Naive thymus-derived CD4-positive, alpha-beta T cell (primary cell): ENCODE measurements at regions of chr7 and their contacts with region 1.

Region 1: GRCh38 chr7:73572767-73573186 is 5.6 kb downstream of the TBL2 start:
- DNase-seq: no peak
- ATAC-seq: no peak
- H3K4me3 ChIP-seq: no peak overlapping the region
- H3K4me3 Mint-ChIP-seq: no peak overlapping the region
- H3K27ac ChIP-seq: no peak overlapping the region
- H3K27ac Mint-ChIP-seq: no peak overlapping the region
- H3K4me1 ChIP-seq: peaks cover 13 to 19% of the 10 kb centered on the region in 2 donors
- H3K4me1 Mint-ChIP-seq: peaks cover 11 to 38% (median 27%) of the 10 kb centered on the region in 7 donors
- H3K27me3 ChIP-seq: no peaks in the 10 kb centered on the region
- H3K27me3 Mint-ChIP-seq: no peaks in the 10 kb centered on the region

Region 2: DNA sequence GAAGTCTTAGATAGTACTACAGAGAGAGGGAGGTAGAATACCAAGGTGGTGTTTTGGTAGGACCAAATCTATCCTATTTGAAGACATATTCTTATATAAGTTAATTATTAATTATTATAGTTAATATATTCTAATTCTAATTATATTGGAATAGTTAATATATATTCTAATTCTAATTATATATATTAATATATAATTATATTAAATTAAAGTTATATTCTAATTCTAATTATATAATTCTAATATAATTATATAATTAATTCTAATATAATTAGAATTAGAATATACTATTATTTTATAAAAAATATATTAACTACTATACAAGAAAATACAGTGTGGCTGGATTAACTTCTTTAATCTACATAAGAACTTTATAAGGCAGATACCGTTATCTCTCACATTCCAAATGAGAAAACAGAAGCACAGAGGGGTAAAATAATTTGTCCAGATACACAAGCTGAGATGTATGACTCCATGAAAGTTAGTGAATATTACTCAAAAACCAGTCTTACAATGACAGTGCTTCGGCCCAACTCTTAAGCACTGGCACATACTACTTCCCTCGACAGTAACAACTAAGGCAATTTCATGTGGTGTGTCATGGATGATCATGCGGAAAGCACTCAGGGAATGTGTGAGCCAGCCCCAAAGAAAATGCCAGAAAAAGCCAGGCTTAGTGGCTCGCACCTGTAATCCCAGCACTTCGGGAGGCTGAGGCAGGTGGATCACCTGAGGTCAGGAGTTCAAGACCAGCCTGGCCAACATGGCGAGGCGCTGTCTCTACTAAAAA is 787.4 kb before region 1 on chr7:
- CTCF ChIA-PET with region 1: interaction called, 10 read pairs
- POLR2A ChIA-PET with region 1: no interaction called
- intact Hi-C with region 1: no loop called
- DNase-seq: no peak
- ATAC-seq: no peak
- H3K4me3 ChIP-seq: no peak overlapping the region
- H3K4me3 Mint-ChIP-seq: no peak overlapping the region
- H3K27ac ChIP-seq: no peak overlapping the region
- H3K27ac Mint-ChIP-seq: no peak overlapping the region
- H3K4me1 ChIP-seq: no peaks in the 10 kb centered on the region
- H3K4me1 Mint-ChIP-seq: peaks cover 0 to 3% (median 0%) of the 10 kb centered on the region in 7 donors
- H3K27me3 ChIP-seq: no peaks in the 10 kb centered on the region
- H3K27me3 Mint-ChIP-seq: no peaks in the 10 kb centered on the region

Region 3: GRCh38 chr7:73593207-73594045 is 20.6 kb after region 1 on chr7:
- CTCF ChIA-PET with region 1: no interaction called
- POLR2A ChIA-PET with region 1: no interaction called
- intact Hi-C with region 1: no loop called
- DNase-seq: no peak
- ATAC-seq: no peak
- H3K4me3 ChIP-seq: no peak overlapping the region
- H3K4me3 Mint-ChIP-seq: no peak overlapping the region
- H3K27ac ChIP-seq: no peak overlapping the region
- H3K27ac Mint-ChIP-seq: no peak overlapping the region
- H3K4me1 ChIP-seq: no peaks in the 10 kb centered on the region
- H3K4me1 Mint-ChIP-seq: no peaks in the 10 kb centered on the region
- H3K27me3 ChIP-seq: no peaks in the 10 kb centered on the region
- H3K27me3 Mint-ChIP-seq: peaks cover 7 to 12% (median 8%) of the 10 kb centered on the region in 5 donors

Region 4: DNA sequence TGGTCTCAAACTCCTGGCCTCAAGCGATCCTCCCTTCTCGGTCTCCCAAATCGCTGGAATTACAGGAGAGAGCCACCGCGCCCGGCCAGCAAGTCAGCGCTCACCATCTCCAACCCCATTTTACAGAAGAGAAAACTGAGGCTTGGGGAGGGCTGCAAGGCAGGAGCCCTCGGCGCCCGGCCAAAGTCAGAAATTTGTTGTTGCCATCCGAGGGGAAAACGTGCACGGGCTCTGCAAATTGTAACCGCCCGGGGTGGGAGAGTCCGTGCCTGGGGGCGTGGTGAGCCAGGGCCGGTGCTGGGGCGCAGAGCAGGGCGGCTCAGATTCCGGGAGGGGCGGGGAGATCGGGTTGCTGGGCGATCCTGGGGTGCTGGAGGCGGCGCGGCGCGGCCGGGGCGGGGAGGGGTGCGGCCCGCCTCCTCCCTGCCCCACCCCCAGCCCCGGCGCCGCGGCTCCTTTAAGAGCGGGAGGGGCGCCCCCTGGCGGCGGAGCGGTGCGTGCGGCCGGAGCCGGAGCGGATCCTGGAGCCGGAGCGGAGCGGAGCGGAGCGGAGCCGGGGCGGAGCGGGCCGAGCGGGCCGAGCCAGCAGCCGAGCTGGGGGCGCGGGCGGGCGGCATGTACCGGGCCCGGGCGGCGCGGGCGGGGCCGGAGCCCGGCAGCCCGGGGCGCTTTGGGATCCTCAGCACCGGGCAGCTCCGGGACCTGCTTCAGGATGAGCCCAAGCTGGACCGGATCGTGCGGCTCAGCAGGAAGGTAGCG is 94.7 kb after region 1 on chr7 and contains the start of gene VPS37D:
- CTCF ChIA-PET with region 1: no interaction called
- POLR2A ChIA-PET with region 1: no interaction called
- intact Hi-C with region 1: no loop called
- DNase-seq: peak; percentile 84 to 99 (median 93)
- ATAC-seq: peak; percentile 98
- H3K4me3 ChIP-seq: peak within 1 kb of the TSS; percentile 44
- H3K4me3 Mint-ChIP-seq: peak within 1 kb of the TSS; percentile 61 to 84 (median 76)
- H3K27ac ChIP-seq: no peak within 1 kb of the TSS
- H3K27ac Mint-ChIP-seq: peak within 1 kb of the TSS in 5 of 9 donors; percentile 22 to 67 (median 49)
- H3K4me1 ChIP-seq: peaks cover 5 to 6% of the 10 kb centered on the region in 2 donors
- H3K4me1 Mint-ChIP-seq: peaks cover 0 to 15% (median 8%) of the 10 kb centered on the region in 7 donors
- H3K27me3 ChIP-seq: no peaks in the 10 kb centered on the region
- H3K27me3 Mint-ChIP-seq: peaks cover 27 to 58% (median 33%) of the 10 kb centered on the region in 5 donors
- total RNA-seq, gene VPS37D: 0.22 to 0.85 (median 0.44) TPM in 3 of 5 experiments, not detected in the others